ENCODE measurements at regions of chr4 and their contacts with region 1.

Region 1: DNA sequence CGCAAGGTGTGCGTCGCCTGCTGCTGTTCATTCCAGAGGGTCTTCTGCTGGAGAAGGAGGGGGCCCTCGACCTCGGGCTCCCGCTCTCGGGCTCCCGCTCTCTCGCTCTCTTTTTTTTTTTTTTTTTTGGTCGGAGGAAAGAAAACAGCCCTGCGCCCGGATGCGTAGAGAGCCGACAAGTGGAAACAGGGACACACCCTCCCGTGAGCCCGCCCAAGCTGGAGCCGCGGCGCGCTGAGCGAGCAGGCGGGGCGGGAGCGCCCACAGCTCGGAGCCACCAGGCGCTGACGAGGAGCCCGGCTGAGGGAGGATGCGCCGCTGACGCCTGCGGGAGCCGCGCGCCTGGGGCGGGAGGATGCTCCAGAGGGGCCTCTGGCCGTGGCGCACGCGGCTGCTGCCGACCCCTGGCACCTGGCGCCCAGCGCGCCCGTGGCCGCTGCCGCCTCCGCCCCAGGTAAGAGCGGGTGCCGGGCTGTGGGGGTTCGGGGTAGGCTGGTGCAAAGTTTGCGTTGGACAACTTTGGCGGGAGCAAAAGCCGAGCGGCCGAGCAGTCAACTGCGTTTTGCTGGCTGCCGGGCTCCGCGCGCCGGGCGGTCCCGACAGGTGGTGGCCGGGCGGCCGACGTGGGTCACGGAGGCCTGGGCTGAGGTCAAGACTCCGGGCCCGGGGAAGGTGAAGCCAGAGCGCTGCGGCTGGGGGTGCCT is at the start of gene MCUB:
- DNase-seq: peak; percentile 90
- H3K4me3 ChIP-seq: peak within 1 kb of the TSS; percentile 64 to 68 (median 68)
- H3K27ac ChIP-seq: peak within 1 kb of the TSS; percentile 65
- H3K4me1 ChIP-seq: peaks cover 12% of the 10 kb centered on the region
- H3K27me3 ChIP-seq: no peaks in the 10 kb centered on the region
- CTCF ChIP-seq: no peak
- total RNA-seq, gene MCUB: 8.3 to 20.3 TPM

Region 2: DNA sequence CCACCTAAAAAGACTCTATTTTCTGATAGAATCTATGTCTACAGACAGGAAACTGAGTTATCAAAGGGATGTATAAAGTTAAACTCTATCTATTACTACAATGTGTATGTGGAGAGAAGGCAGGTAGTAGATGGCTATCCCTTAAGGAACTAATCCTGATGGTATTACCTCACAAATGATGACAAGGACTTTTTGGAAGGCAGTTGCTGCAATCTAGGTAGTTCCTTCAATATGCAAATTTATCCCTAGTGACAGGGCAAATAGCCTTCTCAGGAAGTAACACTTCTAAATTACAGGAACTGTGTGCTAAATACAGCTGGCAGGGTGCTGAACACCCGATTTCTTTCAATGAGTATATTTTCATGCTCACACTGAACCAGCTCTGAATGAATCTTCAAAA is 435.1 kb before region 1 on chr4:
- CTCF ChIA-PET with region 1: no interaction called
- dilution Hi-C with region 1: no loop called
- in situ Hi-C with region 1: no loop called
- intact Hi-C with region 1: no loop called
- DNase-seq: no peak
- H3K4me3 ChIP-seq: no peak overlapping the region
- H3K27ac ChIP-seq: no peak overlapping the region
- H3K4me1 ChIP-seq: no peaks in the 10 kb centered on the region
- H3K27me3 ChIP-seq: no peaks in the 10 kb centered on the region
- CTCF ChIP-seq: no peak

Region 3: GRCh38 chr4:109658871-109659410 is 98.8 kb after region 1 on chr4:
- CTCF ChIA-PET with region 1: no interaction called
- dilution Hi-C with region 1: no loop called
- in situ Hi-C with region 1: no loop called
- intact Hi-C with region 1: loop called (anchors 5 kb)
- DNase-seq: no peak
- H3K4me3 ChIP-seq: no peak overlapping the region
- H3K27ac ChIP-seq: no peak overlapping the region
- H3K4me1 ChIP-seq: no peaks in the 10 kb centered on the region
- H3K27me3 ChIP-seq: no peaks in the 10 kb centered on the region
- CTCF ChIP-seq: peak in 1 of 2 donors; percentile 20

Region 4: GRCh38 chr4:109815151-109816081 is 255.3 kb after region 1 on chr4 and contains the start of gene GAR1:
- CTCF ChIA-PET with region 1: no interaction called
- dilution Hi-C with region 1: no loop called
- in situ Hi-C with region 1: no loop called
- intact Hi-C with region 1: loop called (anchors 10 kb)
- DNase-seq: peak; percentile 93
- H3K4me3 ChIP-seq: peak within 1 kb of the TSS; percentile 72 to 87 (median 82)
- H3K27ac ChIP-seq: peak within 1 kb of the TSS; percentile 87
- H3K4me1 ChIP-seq: no peaks in the 10 kb centered on the region
- H3K27me3 ChIP-seq: no peaks in the 10 kb centered on the region
- CTCF ChIP-seq: no peak
- total RNA-seq, gene GAR1: 3.3 to 22.7 TPM